B cell (primary cell): ENCODE measurements at regions of chr22 and their contacts with region 1.

Region 1: DNA sequence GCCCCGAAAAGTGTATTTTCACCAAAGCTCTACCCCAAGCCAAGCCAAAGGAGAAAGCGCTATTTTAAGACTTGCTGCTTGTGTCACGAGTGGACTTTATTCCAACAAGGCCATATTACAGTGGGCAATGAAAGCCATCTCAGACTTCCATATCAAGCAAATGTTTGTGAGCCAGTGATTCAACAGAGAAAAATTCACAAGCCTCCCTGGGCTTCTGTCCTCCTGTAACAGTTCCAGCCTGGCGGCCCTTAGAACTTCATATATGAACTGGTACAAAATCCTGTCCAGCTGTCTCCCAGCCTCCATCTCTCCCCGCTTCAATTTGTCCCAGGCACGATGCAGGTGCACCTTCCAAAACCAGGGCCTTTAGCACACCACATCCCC is 11.2 kb downstream of the LARGE1 start:
- DNase-seq: no peak
- ATAC-seq: no peak
- H3K4me3 ChIP-seq: no peak overlapping the region
- H3K4me3 Mint-ChIP-seq: no peak overlapping the region
- H3K27ac ChIP-seq: no peak overlapping the region
- H3K27ac Mint-ChIP-seq: peak overlapping the region; percentile 68
- H3K4me1 ChIP-seq: peaks cover 5 to 7% of the 10 kb centered on the region in 2 donors
- H3K4me1 Mint-ChIP-seq: peaks cover 40% of the 10 kb centered on the region
- H3K27me3 ChIP-seq: no peaks in the 10 kb centered on the region
- H3K27me3 Mint-ChIP-seq: no peaks in the 10 kb centered on the region
- CTCF ChIP-seq: no peak

Region 2: GRCh38 chr22:33747576-33748180 is 161.4 kb before region 1 on chr22:
- CTCF ChIA-PET with region 1: no interaction called
- POLR2A ChIA-PET with region 1: interaction called, 15 read pairs
- intact Hi-C with region 1: no loop called
- DNase-seq: peak; percentile 14
- ATAC-seq: no peak
- H3K4me3 ChIP-seq: no peak overlapping the region
- H3K4me3 Mint-ChIP-seq: no peak overlapping the region
- H3K27ac ChIP-seq: no peak overlapping the region
- H3K27ac Mint-ChIP-seq: no peak overlapping the region
- H3K4me1 ChIP-seq: peaks cover 9 to 16% of the 10 kb centered on the region in 2 donors
- H3K4me1 Mint-ChIP-seq: peaks cover 42% of the 10 kb centered on the region
- H3K27me3 ChIP-seq: no peaks in the 10 kb centered on the region
- H3K27me3 Mint-ChIP-seq: no peaks in the 10 kb centered on the region
- CTCF ChIP-seq: no peak

Region 3: GRCh38 chr22:33940741-33941140 is 31.7 kb after region 1 on chr22:
- CTCF ChIA-PET with region 1: no interaction called
- POLR2A ChIA-PET with region 1: no interaction called
- intact Hi-C with region 1: no loop called
- DNase-seq: no peak
- ATAC-seq: no peak
- H3K4me3 ChIP-seq: no peak overlapping the region
- H3K4me3 Mint-ChIP-seq: no peak overlapping the region
- H3K27ac ChIP-seq: no peak overlapping the region
- H3K27ac Mint-ChIP-seq: no peak overlapping the region
- H3K4me1 ChIP-seq: no peaks in the 10 kb centered on the region
- H3K4me1 Mint-ChIP-seq: no peaks in the 10 kb centered on the region
- H3K27me3 ChIP-seq: no peaks in the 10 kb centered on the region
- H3K27me3 Mint-ChIP-seq: peaks cover 40% of the 10 kb centered on the region
- CTCF ChIP-seq: no peak

Region 4: DNA sequence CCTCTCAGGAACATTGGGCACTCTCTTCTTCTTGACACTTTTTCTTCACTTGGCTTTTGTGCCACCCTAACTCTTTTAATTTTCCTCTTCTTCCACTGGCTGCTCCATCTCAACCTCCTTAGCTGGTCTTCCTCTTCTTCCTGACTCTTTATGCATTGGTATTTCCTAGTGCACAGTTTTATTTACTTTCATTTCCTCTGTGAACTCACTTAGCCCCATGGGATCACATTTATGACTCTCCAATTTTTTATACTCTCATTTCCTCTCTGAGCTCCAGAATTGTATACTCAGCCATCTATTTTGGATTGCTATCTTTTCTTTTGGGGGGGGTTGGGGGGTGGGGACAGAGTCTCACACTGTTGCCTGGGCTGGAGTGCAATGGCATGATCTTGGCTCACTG is 49.7 kb after region 1 on chr22:
- CTCF ChIA-PET with region 1: no interaction called
- POLR2A ChIA-PET with region 1: no interaction called
- intact Hi-C with region 1: no loop called
- DNase-seq: peak; percentile 21
- ATAC-seq: no peak
- H3K4me3 ChIP-seq: no peak overlapping the region
- H3K4me3 Mint-ChIP-seq: no peak overlapping the region
- H3K27ac ChIP-seq: no peak overlapping the region
- H3K27ac Mint-ChIP-seq: no peak overlapping the region
- H3K4me1 ChIP-seq: peaks cover 12 to 16% of the 10 kb centered on the region in 2 donors
- H3K4me1 Mint-ChIP-seq: peaks cover 4% of the 10 kb centered on the region
- H3K27me3 ChIP-seq: peaks cover 0 to 5% (median 0%) of the 10 kb centered on the region in 4 experiments
- H3K27me3 Mint-ChIP-seq: peaks cover 7% of the 10 kb centered on the region
- CTCF ChIP-seq: no peak